ENCODE measurements at regions of chr18 and their contacts with region 1.

Region 1: GRCh38 chr18:68714609-68715496 is at the start of gene TMX3:
- DNase-seq: peak; percentile 88 to 97
- ATAC-seq: peak; percentile 98 to 99 (median 99)
- H3K4me3 ChIP-seq: peak within 1 kb of the TSS; percentile 60
- H3K4me3 Mint-ChIP-seq: peak within 1 kb of the TSS; percentile 97
- H3K27ac ChIP-seq: peak within 1 kb of the TSS; percentile 27
- H3K27ac Mint-ChIP-seq: peak within 1 kb of the TSS; percentile 85 to 91
- H3K4me1 ChIP-seq: peaks cover 4% of the 10 kb centered on the region
- H3K4me1 Mint-ChIP-seq: peaks cover 25 to 37% of the 10 kb centered on the region in 2 donors
- H3K27me3 ChIP-seq: no peaks in the 10 kb centered on the region
- H3K27me3 Mint-ChIP-seq: no peaks in the 10 kb centered on the region
- CTCF ChIP-seq: no peak
- total RNA-seq, gene TMX3: 60.2 to 63.9 (median 62.0) TPM

Region 2: DNA sequence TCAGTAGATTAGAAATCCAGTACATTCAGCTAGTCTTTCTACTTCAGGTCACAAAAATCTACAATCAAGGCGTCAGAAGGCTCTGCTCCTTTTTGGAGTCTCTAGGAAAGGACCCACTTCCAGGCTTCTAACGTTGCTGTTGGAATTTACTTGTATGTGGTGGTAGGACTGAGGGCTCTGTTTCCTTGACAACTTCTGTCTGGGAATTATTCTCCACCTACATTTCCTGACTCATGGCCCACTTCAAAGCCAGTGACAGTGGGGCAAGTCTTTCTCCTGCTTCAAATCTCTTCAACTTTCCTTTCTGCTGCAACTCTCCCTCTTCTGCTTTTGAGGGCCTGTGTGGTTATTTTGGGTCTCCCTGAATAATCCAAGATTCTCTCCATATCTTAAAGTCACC is 10.5 kb after region 1 on chr18:
- intact Hi-C with region 1: no loop called
- DNase-seq: no peak
- ATAC-seq: no peak
- H3K4me3 ChIP-seq: no peak overlapping the region
- H3K4me3 Mint-ChIP-seq: no peak overlapping the region
- H3K27ac ChIP-seq: no peak overlapping the region
- H3K27ac Mint-ChIP-seq: no peak overlapping the region
- H3K4me1 ChIP-seq: peaks cover 4% of the 10 kb centered on the region
- H3K4me1 Mint-ChIP-seq: peaks cover 22 to 31% of the 10 kb centered on the region in 2 donors
- H3K27me3 ChIP-seq: no peaks in the 10 kb centered on the region
- H3K27me3 Mint-ChIP-seq: peaks cover 0 to 4% of the 10 kb centered on the region in 2 donors
- CTCF ChIP-seq: no peak

Region 3: GRCh38 chr18:69948919-69949537 is 1234.2 kb after region 1 on chr18:
- intact Hi-C with region 1: loop called (anchors 10 kb)
- DNase-seq: peak in 1 of 2 donors; percentile 59
- ATAC-seq: peak; percentile 58 to 72 (median 70)
- H3K4me3 ChIP-seq: no peak overlapping the region
- H3K4me3 Mint-ChIP-seq: no peak overlapping the region
- H3K27ac ChIP-seq: peak overlapping the region; percentile 55
- H3K27ac Mint-ChIP-seq: no peak overlapping the region
- H3K4me1 ChIP-seq: peaks cover 17% of the 10 kb centered on the region
- H3K4me1 Mint-ChIP-seq: no peaks in the 10 kb centered on the region
- H3K27me3 ChIP-seq: no peaks in the 10 kb centered on the region
- H3K27me3 Mint-ChIP-seq: no peaks in the 10 kb centered on the region
- CTCF ChIP-seq: no peak

Region 4: DNA sequence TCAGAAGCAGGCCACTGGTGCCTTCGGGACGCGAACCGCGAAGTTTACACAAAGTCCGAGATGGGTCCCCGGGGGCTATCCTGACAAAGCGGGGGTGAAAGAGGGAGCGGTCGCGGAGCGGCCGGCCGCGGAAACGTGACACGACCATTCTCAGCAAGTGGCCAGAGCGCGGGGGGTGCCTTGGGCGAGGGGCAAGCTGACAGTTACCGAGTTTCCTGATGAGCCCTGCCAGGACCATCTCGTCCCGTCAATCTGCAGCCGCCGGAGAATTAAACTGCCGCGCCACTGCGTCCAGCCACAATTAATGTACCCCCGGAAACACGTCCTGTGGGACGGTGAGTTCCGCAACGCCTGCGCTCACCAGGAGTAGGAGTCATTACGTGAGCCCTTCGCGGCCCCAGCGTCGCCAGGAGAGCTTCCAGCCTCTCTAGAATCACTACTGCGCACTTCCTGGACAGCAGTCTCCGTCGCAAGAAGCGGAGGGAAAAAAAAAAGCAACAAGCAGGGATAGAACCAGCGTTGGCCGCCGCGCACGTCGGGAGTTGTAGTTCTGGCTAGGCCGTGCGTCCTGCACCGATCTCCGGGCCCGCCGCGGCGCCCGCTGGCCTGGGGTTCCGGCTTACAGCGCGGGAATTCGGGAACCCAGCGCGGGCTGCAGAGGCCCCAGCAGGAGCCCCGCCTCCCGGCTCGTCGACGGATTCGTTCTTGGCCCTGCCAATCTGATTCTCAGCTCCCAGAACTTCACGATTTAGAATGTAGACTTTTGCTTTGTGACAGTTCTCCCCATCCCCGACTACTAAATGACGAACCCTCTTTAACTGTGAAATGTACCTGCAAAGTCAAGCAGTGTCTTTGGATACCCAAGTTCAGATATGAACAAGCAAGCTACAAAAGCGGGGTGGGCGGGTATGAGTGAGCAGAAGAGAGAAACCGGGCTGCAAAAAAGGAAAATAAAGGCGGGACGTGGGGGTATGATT is 1490.9 kb after region 1 on chr18 and contains the start of gene RTTN:
- intact Hi-C with region 1: loop called (anchors 1 kb)
- DNase-seq: peak; percentile 88 to 95
- ATAC-seq: peak; percentile 90 to 96 (median 92)
- H3K4me3 ChIP-seq: peak within 1 kb of the TSS; percentile 83
- H3K4me3 Mint-ChIP-seq: peak within 1 kb of the TSS; percentile 98
- H3K27ac ChIP-seq: peak within 1 kb of the TSS; percentile 92
- H3K27ac Mint-ChIP-seq: peak within 1 kb of the TSS; percentile 94 to 97
- H3K4me1 ChIP-seq: peaks cover 6% of the 10 kb centered on the region
- H3K4me1 Mint-ChIP-seq: peaks cover 25 to 27% of the 10 kb centered on the region in 2 donors
- H3K27me3 ChIP-seq: peaks cover 6% of the 10 kb centered on the region
- H3K27me3 Mint-ChIP-seq: peaks cover 4 to 24% of the 10 kb centered on the region in 2 donors
- CTCF ChIP-seq: no peak
- total RNA-seq, gene RTTN: 33.0 to 41.0 (median 35.5) TPM

Measured in natural killer cell (primary cell).